ENCODE measurements at regions of chr1 and their contacts with region 1.

Region 1: DNA sequence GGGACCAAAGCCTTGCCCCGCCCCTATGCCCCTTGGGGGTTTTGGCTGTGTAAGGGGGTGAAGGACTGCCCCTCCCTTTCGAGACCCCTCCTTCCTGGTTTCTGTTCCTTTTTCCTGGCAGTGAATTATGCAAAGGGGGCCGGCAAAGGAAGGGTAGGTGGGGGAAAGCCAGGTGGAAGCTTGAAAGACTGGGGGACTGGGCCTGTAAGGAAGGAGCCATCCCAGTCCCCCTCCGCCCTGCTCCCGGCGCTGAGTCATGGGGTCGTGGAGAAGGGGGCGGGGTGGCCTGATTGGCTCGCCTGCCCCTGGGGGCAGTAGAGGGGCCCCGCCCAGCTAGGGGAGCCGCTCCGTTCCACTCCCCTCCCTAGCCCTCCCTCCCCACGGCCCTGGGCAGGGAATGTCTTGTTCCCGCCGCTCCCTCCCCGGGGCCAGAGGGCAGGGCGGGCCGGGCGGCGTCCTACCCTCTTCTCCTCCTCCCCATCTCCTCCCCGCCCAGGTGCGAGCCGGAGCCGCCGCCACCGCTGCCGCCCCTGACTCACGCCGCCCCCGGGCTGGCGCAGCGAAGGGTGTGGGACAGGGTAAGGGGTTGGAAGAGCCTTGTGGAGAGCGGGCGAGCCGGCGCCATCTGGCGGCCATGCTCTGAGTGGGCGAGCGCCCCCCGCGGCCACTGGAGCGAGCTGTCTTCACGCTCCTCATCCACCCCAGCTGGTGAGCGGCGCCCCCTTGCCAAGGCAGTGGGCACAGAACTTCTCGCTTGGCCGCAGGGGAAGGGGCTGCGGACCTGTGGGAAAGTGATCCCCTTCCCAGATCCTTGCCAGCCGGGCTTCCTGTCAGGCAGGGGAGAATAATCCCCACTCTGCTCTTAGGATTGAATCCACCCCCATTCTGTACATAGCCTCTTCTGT is 14.7 kb downstream of the ZBTB7B start:
- DNase-seq: peak; percentile 87
- H3K4me3 Mint-ChIP-seq: peak overlapping the region; percentile 7
- H3K27ac Mint-ChIP-seq: peak overlapping the region; percentile 26
- H3K4me1 Mint-ChIP-seq: peaks cover 63% of the 10 kb centered on the region
- H3K27me3 Mint-ChIP-seq: no peaks in the 10 kb centered on the region

Region 2: DNA sequence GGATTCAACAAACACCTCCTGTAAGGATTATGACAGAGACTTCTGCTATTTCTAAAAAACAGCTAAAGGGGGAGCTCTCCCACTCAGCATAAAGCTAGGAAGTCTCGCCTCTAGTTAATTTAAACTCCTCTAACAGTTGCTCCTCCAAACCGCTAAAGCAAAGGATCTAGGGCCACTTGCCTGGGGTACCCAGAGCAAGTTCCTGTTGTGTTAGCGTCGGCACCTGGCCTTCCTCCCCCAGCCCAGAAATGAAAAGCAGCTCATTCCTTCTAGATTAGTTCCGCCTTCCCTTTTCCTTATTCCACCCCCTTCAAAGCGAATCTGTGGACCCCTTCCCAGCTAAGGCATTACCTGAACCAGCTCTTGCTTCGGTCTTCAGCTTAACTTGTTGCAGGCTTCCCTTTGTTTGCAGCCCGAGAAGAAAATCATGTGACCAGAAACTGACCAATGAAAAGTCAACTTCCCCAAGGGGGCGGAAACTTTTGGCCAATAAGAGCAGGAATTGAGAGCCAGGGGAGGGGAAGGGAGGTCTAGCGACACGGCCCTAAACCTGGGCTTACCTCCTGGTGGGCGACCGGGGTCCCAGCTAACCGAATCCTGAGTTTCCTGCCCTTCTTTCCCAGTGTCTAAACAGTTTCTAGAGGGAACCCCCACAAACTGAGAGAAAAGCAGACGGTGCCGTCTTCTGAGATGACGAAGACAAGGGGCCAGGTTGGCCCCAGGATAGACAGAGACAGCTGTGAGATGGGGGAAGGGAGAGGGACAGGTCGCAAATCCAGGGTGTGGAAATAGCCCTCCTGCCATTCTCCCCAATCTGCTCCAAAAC is 61.4 kb before region 1 on chr1 and contains the start of gene PBXIP1:
- CTCF ChIA-PET with region 1: interaction called, 27 read pairs
- POLR2A ChIA-PET with region 1: interaction called, 12 read pairs
- DNase-seq: peak; percentile 88
- H3K4me3 Mint-ChIP-seq: peak within 1 kb of the TSS; percentile 96
- H3K27ac Mint-ChIP-seq: peak within 1 kb of the TSS; percentile 97
- H3K4me1 Mint-ChIP-seq: peaks cover 85% of the 10 kb centered on the region
- H3K27me3 Mint-ChIP-seq: no peaks in the 10 kb centered on the region
- total RNA-seq, gene PBXIP1: 169 TPM

Region 3: GRCh38 chr1:154974063-154974807 is 43.1 kb before region 1 on chr1 and contains the start of gene CKS1B:
- CTCF ChIA-PET with region 1: interaction called, 51 read pairs
- POLR2A ChIA-PET with region 1: interaction called, 19 read pairs
- DNase-seq: peak; percentile 97
- H3K4me3 Mint-ChIP-seq: no peak within 1 kb of the TSS
- H3K27ac Mint-ChIP-seq: no peak within 1 kb of the TSS
- H3K4me1 Mint-ChIP-seq: peaks cover 45% of the 10 kb centered on the region
- H3K27me3 Mint-ChIP-seq: no peaks in the 10 kb centered on the region
- total RNA-seq, gene CKS1B: 151 to 162 TPM

Region 4: DNA sequence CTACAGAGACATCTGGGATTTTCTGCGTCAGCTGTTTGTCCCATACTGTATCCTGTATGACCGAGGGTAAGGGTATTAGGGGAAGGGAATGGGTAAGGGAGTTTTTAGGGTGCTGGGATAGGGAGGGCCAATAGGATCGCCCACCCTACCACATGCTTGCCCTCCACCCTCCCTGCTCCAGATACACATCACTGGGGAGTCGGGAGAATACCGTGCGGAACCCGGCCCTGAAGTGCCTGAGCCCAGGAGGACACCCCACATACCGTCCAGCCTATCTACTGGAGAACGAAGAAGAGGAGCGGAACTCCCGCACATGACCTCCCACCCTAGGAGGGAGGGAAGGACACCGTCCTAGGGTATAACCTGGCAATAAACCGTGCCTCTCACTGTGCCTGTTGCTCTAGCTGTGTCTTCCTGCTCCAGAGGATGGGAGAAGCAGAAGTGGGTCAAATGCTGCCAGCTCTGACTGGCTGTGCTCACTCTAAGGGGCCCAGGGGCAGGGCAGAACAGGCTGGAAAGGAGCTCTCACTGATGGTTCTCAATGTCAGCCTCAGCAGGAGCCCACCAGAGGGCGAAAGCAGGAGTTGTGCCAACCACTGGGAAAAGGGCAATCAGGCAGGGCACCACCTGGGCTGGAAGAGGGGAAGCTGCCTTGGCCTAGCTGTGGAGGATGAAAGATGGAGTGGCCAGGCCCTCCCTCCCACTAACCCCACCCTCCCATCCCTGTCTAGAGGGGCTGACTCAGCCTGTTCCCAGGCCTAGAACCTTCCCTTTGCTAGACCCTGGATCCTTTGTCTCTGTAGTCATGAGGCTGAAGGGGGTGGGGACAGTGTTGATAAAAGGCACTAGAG is 24.3 kb before region 1 on chr1:
- CTCF ChIA-PET with region 1: interaction called, 139 read pairs
- POLR2A ChIA-PET with region 1: interaction called, 203 read pairs
- DNase-seq: no peak
- H3K4me3 Mint-ChIP-seq: no peak overlapping the region
- H3K27ac Mint-ChIP-seq: no peak overlapping the region
- H3K4me1 Mint-ChIP-seq: peaks cover 23% of the 10 kb centered on the region
- H3K27me3 Mint-ChIP-seq: no peaks in the 10 kb centered on the region

Region 5: DNA sequence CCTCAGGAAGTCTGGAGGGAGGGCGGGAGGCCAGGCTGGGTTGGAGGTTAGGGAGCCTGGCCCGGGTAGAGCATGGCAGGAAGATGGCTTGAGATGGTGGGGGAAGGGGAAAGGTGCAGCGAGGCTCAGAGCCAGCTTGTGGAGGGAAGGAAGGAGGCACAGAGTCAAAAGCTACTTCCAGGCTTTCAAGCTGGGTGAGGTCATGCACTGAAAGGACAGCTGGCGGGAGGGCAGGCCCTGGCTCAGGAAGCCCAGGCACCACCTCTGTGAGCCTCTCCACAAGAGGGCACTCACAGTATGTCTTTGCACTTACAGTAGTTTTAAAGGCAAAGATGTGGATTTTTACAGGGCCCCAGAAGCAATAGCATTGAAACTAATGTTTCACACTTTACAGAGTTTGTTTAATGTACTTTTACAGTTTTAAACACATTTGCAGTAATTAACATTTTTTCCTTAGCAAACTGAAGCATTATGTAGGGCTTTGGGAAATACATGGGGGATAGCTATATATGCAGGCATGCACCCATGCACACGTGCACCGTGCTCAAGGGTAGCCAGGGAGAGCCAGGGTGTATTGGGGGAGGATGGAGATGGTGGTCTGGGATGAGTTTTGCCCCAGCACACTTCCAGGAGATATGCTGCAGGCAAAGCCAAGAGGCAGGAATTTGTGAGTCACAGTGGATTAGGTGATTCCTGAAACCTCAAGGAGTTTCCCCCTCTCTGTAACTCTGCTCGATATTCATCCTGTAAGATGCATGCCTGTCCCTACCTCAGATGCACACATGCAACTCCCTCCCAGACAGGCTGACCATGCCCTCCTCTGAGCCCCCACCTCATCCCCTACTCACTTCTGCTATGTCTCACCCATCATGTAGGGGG is 27.8 kb after region 1 on chr1:
- CTCF ChIA-PET with region 1: interaction called, 19 read pairs
- POLR2A ChIA-PET with region 1: no interaction called
- DNase-seq: peak; percentile 73
- H3K4me3 Mint-ChIP-seq: no peak overlapping the region
- H3K27ac Mint-ChIP-seq: no peak overlapping the region
- H3K4me1 Mint-ChIP-seq: peaks cover 17% of the 10 kb centered on the region
- H3K27me3 Mint-ChIP-seq: peaks cover 3% of the 10 kb centered on the region

Region 6: GRCh38 chr1:155609515-155610256 is 592.4 kb after region 1 on chr1 and contains the start of gene MSTO1:
- CTCF ChIA-PET with region 1: no interaction called
- POLR2A ChIA-PET with region 1: no interaction called
- DNase-seq: peak; percentile 96
- H3K4me3 Mint-ChIP-seq: peak within 1 kb of the TSS; percentile 84
- H3K27ac Mint-ChIP-seq: peak within 1 kb of the TSS; percentile 68
- H3K4me1 Mint-ChIP-seq: peaks cover 10% of the 10 kb centered on the region
- H3K27me3 Mint-ChIP-seq: no peaks in the 10 kb centered on the region
- total RNA-seq, gene MSTO1: 43.4 to 43.6 TPM

Measured in activated CD4-positive, alpha-beta memory T cell treated with anti-CD3 and anti-CD28 coated beads, Interleukin-2, amount 10 ng/mL, durations not matched to agents 7 days and 5 days (primary cell).